Activated CD4-positive, alpha-beta T cell treated with anti-CD3 and anti-CD28 coated beads for 36 hours (primary cell): ENCODE measurements at regions of chr1 and their contacts with region 1.

Region 1: GRCh38 chr1:157090196-157090647 is 9.4 kb downstream of the ETV3L start:
- DNase-seq: peak; percentile 94
- ATAC-seq: peak; percentile 93
- H3K4me3 Mint-ChIP-seq: no peak overlapping the region
- H3K27ac Mint-ChIP-seq: no peak overlapping the region
- H3K4me1 Mint-ChIP-seq: no peaks in the 10 kb centered on the region
- H3K27me3 Mint-ChIP-seq: peaks cover 2% of the 10 kb centered on the region

Region 2: GRCh38 chr1:157040802-157041201 is 49.4 kb before region 1 on chr1:
- CTCF ChIA-PET with region 1: interaction called, 15 read pairs
- POLR2A ChIA-PET with region 1: no interaction called
- intact Hi-C with region 1: no loop called
- DNase-seq: no peak
- ATAC-seq: no peak
- H3K4me3 Mint-ChIP-seq: no peak overlapping the region
- H3K27ac Mint-ChIP-seq: no peak overlapping the region
- H3K4me1 Mint-ChIP-seq: peaks cover 4% of the 10 kb centered on the region
- H3K27me3 Mint-ChIP-seq: peaks cover 51% of the 10 kb centered on the region

Region 3: GRCh38 chr1:157104598-157105293 is 14.5 kb after region 1 on chr1:
- CTCF ChIA-PET with region 1: interaction called, 18 read pairs
- POLR2A ChIA-PET with region 1: no interaction called
- intact Hi-C with region 1: no loop called
- DNase-seq: no peak
- ATAC-seq: no peak
- H3K4me3 Mint-ChIP-seq: no peak overlapping the region
- H3K27ac Mint-ChIP-seq: no peak overlapping the region
- H3K4me1 Mint-ChIP-seq: peaks cover 18% of the 10 kb centered on the region
- H3K27me3 Mint-ChIP-seq: peaks cover 31% of the 10 kb centered on the region

Region 4: GRCh38 chr1:157138220-157139051 is 48.2 kb after region 1 on chr1 and contains the start of gene ETV3:
- CTCF ChIA-PET with region 1: interaction called, 16 read pairs
- POLR2A ChIA-PET with region 1: no interaction called
- intact Hi-C with region 1: no loop called
- DNase-seq: peak; percentile 94
- ATAC-seq: peak; percentile 72
- H3K4me3 Mint-ChIP-seq: peak within 1 kb of the TSS; percentile 97
- H3K27ac Mint-ChIP-seq: peak within 1 kb of the TSS; percentile 95
- H3K4me1 Mint-ChIP-seq: peaks cover 75% of the 10 kb centered on the region
- H3K27me3 Mint-ChIP-seq: no peaks in the 10 kb centered on the region
- total RNA-seq, gene ETV3: 32.0 to 36.7 TPM

Region 5: GRCh38 chr1:157163273-157164127 is 73.3 kb after region 1 on chr1:
- CTCF ChIA-PET with region 1: interaction called, 455 read pairs
- POLR2A ChIA-PET with region 1: no interaction called
- intact Hi-C with region 1: no loop called
- DNase-seq: peak; percentile 85
- ATAC-seq: peak; percentile 83
- H3K4me3 Mint-ChIP-seq: peak overlapping the region; percentile 1
- H3K27ac Mint-ChIP-seq: peak overlapping the region; percentile 13
- H3K4me1 Mint-ChIP-seq: peaks cover 4% of the 10 kb centered on the region
- H3K27me3 Mint-ChIP-seq: peaks cover 7% of the 10 kb centered on the region